Natural killer cell (primary cell): ENCODE measurements at regions of chr18 and their contacts with region 1.

Region 1: GRCh38 chr18:47970664-47971531 is 40.4 kb upstream of the SMAD2 start:
- DNase-seq: no peak
- ATAC-seq: peak; percentile 46 to 67 (median 58)
- H3K4me3 ChIP-seq: no peak overlapping the region
- H3K4me3 Mint-ChIP-seq: no peak overlapping the region
- H3K27ac ChIP-seq: no peak overlapping the region
- H3K27ac Mint-ChIP-seq: no peak overlapping the region
- H3K4me1 ChIP-seq: no peaks in the 10 kb centered on the region
- H3K4me1 Mint-ChIP-seq: peaks cover 11% of the 10 kb centered on the region in 2 donors
- H3K27me3 ChIP-seq: no peaks in the 10 kb centered on the region
- H3K27me3 Mint-ChIP-seq: peaks cover 11 to 29% of the 10 kb centered on the region in 2 donors
- CTCF ChIP-seq: no peak

Region 2: DNA sequence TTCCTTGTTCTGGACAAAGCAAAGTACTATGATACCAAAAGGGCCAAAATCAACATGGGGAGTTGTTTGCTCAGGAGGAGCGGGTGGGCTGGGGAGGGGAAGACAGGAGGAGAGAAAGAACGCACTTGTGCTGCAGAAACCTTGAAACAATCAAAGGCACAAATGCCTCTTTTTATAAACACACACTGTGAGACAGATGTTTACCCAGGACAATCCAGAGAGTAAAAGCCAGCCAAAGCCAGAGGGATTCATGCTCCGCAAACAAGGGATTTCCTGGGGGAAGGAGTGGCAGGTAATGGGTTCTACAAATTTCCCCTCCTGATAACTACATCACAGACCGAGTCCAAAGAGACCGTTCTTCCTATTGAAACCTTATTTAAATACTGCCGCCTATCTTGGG is 395.9 kb before region 1 on chr18:
- intact Hi-C with region 1: no loop called
- DNase-seq: no peak
- ATAC-seq: no peak
- H3K4me3 ChIP-seq: no peak overlapping the region
- H3K4me3 Mint-ChIP-seq: no peak overlapping the region
- H3K27ac ChIP-seq: no peak overlapping the region
- H3K27ac Mint-ChIP-seq: no peak overlapping the region
- H3K4me1 ChIP-seq: no peaks in the 10 kb centered on the region
- H3K4me1 Mint-ChIP-seq: no peaks in the 10 kb centered on the region
- H3K27me3 ChIP-seq: no peaks in the 10 kb centered on the region
- H3K27me3 Mint-ChIP-seq: peaks cover 2 to 11% of the 10 kb centered on the region in 2 donors
- CTCF ChIP-seq: no peak

Region 3: GRCh38 chr18:47986620-47987387 is 15.9 kb after region 1 on chr18:
- intact Hi-C with region 1: no loop called
- DNase-seq: peak in 1 of 2 donors; percentile 14
- ATAC-seq: no peak
- H3K4me3 ChIP-seq: no peak overlapping the region
- H3K4me3 Mint-ChIP-seq: no peak overlapping the region
- H3K27ac ChIP-seq: no peak overlapping the region
- H3K27ac Mint-ChIP-seq: peak overlapping the region in 1 of 2 donors; percentile 49
- H3K4me1 ChIP-seq: no peaks in the 10 kb centered on the region
- H3K4me1 Mint-ChIP-seq: peaks cover 0 to 10% of the 10 kb centered on the region in 2 donors
- H3K27me3 ChIP-seq: no peaks in the 10 kb centered on the region
- H3K27me3 Mint-ChIP-seq: peaks cover 0 to 6% of the 10 kb centered on the region in 2 donors
- CTCF ChIP-seq: no peak

Region 4: GRCh38 chr18:48002933-48003365 is 32.1 kb after region 1 on chr18:
- intact Hi-C with region 1: loop called (anchors 1 kb)
- DNase-seq: no peak
- ATAC-seq: no peak
- H3K4me3 ChIP-seq: no peak overlapping the region
- H3K4me3 Mint-ChIP-seq: no peak overlapping the region
- H3K27ac ChIP-seq: no peak overlapping the region
- H3K27ac Mint-ChIP-seq: no peak overlapping the region
- H3K4me1 ChIP-seq: peaks cover 19% of the 10 kb centered on the region
- H3K4me1 Mint-ChIP-seq: peaks cover 3 to 5% of the 10 kb centered on the region in 2 donors
- H3K27me3 ChIP-seq: peaks cover 3% of the 10 kb centered on the region
- H3K27me3 Mint-ChIP-seq: peaks cover 0 to 4% of the 10 kb centered on the region in 2 donors
- CTCF ChIP-seq: no peak